Right ventricle myocardium inferior (tissue), 1 donor: ENCODE measurements at regions of chr4 and their contacts with region 1.

Region 1: DNA sequence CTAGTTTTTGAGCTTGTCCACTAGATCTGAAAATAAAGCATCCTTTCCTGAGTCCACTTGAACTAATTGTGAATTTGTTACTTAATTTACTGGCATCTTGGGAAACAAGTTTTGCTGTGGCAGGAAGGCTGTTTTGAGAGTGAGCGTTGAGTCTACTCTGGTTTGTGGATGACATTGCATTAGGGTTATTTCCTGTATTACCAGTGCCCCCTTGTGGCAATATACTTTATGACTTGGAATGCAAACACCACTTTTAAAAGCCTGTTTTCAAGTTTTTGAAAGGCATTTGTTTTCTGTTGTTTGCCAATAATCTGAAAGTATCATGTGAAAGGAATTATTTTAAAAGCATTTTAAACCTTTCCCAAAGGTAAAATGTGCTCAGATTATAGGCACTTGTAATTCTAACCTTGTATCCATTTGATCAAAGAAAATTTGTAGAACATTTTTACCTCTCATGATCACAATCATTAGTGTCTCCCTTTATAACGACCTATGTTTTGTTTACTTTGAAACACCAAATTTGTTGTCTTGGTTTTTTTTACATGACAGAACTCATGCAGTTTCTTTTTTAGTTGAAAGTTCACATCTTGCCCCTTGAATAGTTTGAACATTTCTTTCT is 18.0 kb upstream of the CYP2U1 start:
- DNase-seq: no peak
- ATAC-seq: peak; percentile 79

Region 2: DNA sequence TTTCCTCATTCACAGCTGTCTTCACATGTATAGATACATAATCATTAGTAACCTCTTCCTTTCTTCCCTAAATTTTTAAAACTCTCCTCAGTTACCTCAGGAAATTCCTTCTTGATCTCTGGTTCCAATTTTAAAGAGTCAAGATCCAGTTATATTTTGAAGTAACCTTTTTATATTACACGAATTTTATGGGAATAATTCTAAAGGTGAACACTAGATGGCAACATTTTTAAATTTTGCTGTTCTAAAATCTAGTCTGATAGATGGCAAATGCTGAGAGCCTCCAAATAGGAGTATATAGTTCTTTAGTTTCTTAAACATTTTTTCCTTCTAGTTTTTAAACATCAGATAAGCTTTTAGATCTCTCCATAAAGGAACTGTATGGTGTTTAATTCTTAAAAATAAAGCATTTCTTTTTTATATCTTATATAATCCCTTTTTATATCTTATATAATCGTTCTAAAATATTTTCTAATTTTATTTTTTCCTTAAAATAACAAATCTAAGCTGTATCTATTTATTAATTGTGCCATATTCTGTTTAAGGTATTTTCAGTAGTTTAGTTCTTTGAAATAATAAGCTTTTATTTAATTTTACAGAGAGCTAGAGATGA is 155.4 kb before region 1 on chr4:
- intact Hi-C with region 1: loop called (anchors 1 kb)
- DNase-seq: no peak
- ATAC-seq: no peak